ENCODE measurements at regions of chr1 and their contacts with region 1.

Region 1: DNA sequence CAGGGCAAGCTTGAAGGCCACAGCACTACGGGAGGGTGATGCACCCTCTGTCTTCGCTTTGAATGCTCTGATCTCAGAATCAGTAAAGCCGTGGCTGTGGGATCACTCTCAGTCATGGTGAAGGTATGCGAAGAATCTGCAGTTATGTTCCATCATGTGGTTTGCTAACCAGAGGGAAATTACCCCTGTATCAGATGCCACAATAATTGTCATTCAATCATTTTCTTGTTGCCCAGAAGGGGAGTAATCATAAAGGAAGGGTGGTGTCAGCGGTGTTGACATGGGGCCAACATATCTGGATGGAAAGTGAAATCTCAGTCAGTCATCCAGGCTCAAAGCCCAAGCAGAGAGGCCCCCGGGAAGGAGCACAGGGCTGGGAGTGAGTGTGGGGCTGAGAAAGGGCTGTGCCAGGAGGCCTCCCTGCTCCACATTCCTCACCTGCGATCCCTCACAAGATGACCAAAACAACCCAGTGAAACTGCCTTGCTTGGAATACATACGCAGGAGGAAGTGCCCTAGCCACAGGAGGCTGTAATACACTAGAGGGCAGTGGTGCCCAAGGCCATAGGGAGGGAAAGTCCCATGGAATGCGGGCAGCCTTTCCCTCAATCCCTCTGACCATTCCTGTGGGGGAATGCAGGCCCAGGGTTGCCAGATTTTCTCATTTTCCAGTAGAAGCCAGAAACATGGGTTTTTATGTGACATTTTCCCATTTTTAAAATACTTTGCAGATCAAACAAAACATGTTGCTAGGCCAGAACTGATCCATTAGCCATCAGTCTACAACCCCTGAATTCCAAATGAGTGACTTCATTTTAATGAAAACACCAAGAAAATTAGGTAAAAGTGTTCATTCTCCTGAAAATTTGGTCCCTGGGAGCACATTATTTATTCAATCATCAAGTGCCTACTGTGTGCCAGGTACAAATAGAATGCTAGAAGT is 95.7 kb upstream of the VANGL1 start:
- DNase-seq: peak; percentile 97
- H3K4me3 ChIP-seq: no peak overlapping the region
- H3K27ac ChIP-seq: peak overlapping the region; percentile 75
- H3K4me1 ChIP-seq: peaks cover 22% of the 10 kb centered on the region
- H3K27me3 ChIP-seq: no peaks in the 10 kb centered on the region
- CTCF ChIP-seq: peak; percentile 81 to 84

Region 2: DNA sequence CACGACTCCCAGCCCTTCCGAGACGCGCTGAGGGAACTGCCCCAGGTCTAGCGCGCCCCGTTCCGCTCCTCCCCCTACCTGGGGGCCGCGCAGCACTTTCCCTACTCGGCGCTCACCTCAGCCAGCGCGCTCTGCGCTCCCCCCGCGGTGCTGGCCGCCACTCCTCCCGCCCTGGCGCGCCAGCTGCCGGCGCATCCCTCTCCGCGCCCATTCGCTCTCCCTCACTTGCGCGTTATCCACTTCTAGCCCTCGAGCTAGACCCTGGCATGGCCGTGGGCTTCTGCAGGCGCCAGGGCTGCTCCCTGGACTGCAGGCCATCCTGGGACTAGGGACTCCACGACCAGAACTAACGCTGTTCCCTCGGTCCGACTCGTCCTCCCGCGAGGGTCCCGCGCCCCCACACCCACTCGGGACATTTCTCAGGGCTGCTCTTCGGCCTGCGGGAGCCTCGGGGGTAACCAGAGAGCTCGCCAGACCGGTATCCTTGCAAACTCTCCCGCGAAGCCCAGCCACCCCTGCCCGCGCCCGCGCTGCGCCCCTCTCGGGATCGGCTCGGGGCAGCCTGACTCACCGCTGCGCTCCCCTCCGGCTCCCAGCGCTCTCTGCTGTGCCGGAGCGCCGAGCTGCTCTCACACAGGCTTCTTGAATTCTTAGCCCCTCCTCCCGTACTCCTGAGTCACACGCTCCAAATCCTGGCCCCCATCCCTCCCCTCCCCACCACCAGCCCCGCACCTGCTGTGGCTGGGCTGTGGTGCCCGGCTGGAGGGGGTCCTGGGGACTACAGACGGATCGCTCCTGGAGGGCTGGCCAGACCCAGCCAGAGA is 208.2 kb before region 1 on chr1 and contains the start of gene NGF:
- CTCF ChIA-PET with region 1: no interaction called
- dilution Hi-C with region 1: no loop called
- in situ Hi-C with region 1: no loop called
- intact Hi-C with region 1: loop called (anchors 2 kb)
- DNase-seq: peak; percentile 31
- H3K4me3 ChIP-seq: peak within 1 kb of the TSS; percentile 35 to 48 (median 47)
- H3K27ac ChIP-seq: no peak within 1 kb of the TSS
- H3K4me1 ChIP-seq: peaks cover 9% of the 10 kb centered on the region
- H3K27me3 ChIP-seq: no peaks in the 10 kb centered on the region
- CTCF ChIP-seq: no peak
- total RNA-seq, gene NGF: 0.17 to 1.3 TPM

Region 3: DNA sequence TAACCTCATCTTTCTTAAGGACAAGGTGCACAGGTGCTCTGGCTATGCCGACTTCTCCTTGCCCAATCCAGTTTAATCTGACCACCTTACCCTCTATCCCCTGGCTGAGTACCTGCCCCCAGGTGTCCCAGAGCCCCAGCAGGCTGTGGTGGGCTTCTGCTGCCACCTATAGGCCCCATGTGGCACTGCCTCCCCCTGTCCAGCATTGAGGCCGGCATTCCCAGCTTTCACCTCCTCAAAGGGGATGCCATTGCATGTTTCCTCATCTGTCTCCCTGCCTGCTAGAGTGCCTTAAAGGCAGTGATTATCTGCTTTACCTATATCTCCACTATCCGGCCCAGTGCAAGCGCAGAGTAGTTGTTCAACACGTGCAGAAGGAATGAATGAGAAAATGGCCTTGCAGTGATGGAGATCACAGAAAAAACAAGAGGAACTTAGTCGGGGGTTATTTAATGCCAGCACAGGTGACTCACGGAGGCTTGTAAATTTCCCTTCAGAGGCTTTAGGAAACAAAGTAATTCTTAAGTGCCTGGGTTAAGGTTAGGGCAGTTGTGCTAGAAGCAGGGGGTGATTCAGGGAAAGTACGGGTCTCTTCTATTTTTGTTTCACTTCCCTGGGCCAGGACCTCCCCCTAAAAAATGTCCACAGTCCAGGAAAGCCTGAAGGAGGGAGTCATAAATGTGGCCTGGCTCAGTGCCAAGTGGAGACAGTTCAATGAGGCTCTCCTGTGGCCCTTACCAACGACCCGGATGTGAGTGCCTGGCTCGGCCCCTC is 76.2 kb before region 1 on chr1:
- CTCF ChIA-PET with region 1: no interaction called
- dilution Hi-C with region 1: no loop called
- in situ Hi-C with region 1: loop called in 1 of 2 experiments (anchors 10 kb)
- intact Hi-C with region 1: loop called (anchors 1 kb)
- DNase-seq: peak; percentile 74
- H3K4me3 ChIP-seq: no peak overlapping the region
- H3K27ac ChIP-seq: peak overlapping the region; percentile 31
- H3K4me1 ChIP-seq: peaks cover 28% of the 10 kb centered on the region
- H3K27me3 ChIP-seq: no peaks in the 10 kb centered on the region
- CTCF ChIP-seq: peak; percentile 93 to 98

Region 4: GRCh38 chr1:115496904-115497527 is 49.0 kb before region 1 on chr1:
- CTCF ChIA-PET with region 1: no interaction called
- dilution Hi-C with region 1: no loop called
- in situ Hi-C with region 1: no loop called
- intact Hi-C with region 1: loop called (anchors 1 kb)
- DNase-seq: peak; percentile 87
- H3K4me3 ChIP-seq: no peak overlapping the region
- H3K27ac ChIP-seq: peak overlapping the region; percentile 46
- H3K4me1 ChIP-seq: peaks cover 23% of the 10 kb centered on the region
- H3K27me3 ChIP-seq: no peaks in the 10 kb centered on the region
- CTCF ChIP-seq: no peak

Region 5: DNA sequence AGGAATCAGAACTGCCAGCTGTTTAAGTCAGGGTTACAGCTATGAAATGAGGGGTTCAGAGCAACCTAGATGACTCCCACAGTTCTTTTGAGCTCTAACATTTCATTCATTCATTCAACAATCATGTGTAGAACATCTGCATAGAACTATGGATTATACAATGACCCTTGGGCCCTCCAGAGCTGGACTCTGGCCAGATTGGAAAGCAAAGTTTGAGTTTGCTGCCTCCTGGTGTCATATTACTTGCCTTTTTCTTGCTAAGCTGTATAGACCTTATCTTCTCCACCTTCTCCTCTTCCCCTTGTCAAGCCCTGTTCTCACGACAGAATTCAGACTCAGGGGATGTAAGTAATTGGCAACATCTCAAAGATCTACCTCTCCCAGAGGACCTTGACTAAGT is 218.5 kb after region 1 on chr1:
- CTCF ChIA-PET with region 1: no interaction called
- dilution Hi-C with region 1: no loop called
- in situ Hi-C with region 1: no loop called
- intact Hi-C with region 1: loop called (anchors 1 kb)
- DNase-seq: peak; percentile 42
- H3K4me3 ChIP-seq: no peak overlapping the region
- H3K27ac ChIP-seq: no peak overlapping the region
- H3K4me1 ChIP-seq: no peaks in the 10 kb centered on the region
- H3K27me3 ChIP-seq: no peaks in the 10 kb centered on the region
- CTCF ChIP-seq: peak; percentile 67 to 69